Right lobe of liver (tissue), 6 donors: ENCODE measurements at regions of chr16 and their contacts with region 1.

Region 1: DNA sequence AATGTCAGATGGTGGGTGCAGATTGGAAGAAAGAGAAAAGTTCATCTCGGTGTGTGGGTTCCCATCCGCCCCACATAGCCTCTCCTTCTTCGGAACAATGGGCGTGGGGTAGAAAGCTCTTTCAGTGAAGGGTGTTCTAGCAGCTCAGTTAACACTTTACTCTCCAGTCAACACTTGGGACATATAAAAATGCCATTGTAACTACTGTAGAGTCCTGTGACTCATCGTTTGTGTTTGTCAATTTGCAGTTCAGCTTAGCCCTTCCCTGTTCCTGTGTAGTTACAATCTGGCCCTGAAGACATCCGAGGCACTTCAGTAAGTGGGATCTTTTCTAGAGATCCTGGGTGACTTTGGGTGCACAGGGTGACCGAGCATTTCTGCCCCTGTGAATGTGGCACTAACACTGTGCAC is 11.5 kb upstream of the CLEC18C start:
- DNase-seq: no peak
- ATAC-seq: peak in 1 of 4 donors; percentile 13
- H3K4me3 ChIP-seq: no peak overlapping the region
- H3K27ac ChIP-seq: no peak overlapping the region
- H3K4me1 ChIP-seq: no peaks in the 10 kb centered on the region
- H3K27me3 ChIP-seq: no peaks in the 10 kb centered on the region
- CTCF ChIP-seq: no peak
- POLR2A ChIP-seq: no peak

Region 2: GRCh38 chr16:70251629-70252354 is 89.7 kb after region 1 on chr16 and contains the start of gene EXOSC6:
- intact Hi-C with region 1: loop called in 1 of 2 experiments (anchors 10 kb)
- DNase-seq: peak; percentile 91 to 96 (median 92)
- ATAC-seq: peak; percentile 95 to 98 (median 96)
- H3K4me3 ChIP-seq: peak within 1 kb of the TSS; percentile 73 to 88 (median 84)
- H3K27ac ChIP-seq: peak within 1 kb of the TSS; percentile 60 to 79 (median 74)
- H3K4me1 ChIP-seq: peaks cover 0 to 20% (median 8%) of the 10 kb centered on the region in 4 donors
- H3K27me3 ChIP-seq: no peaks in the 10 kb centered on the region
- CTCF ChIP-seq: peak; percentile 94 to 98 (median 96)
- POLR2A ChIP-seq: peak; percentile 77
- total RNA-seq, gene EXOSC6: 6.1 to 13.1 (median 10.2) TPM

Region 3: GRCh38 chr16:70267516-70267915 is 105.5 kb after region 1 on chr16:
- intact Hi-C with region 1: loop called in 1 of 2 experiments (anchors 10 kb)
- DNase-seq: peak in 1 of 3 donors; percentile 26
- ATAC-seq: peak; percentile 56 to 74 (median 62)
- H3K4me3 ChIP-seq: no peak overlapping the region
- H3K27ac ChIP-seq: no peak overlapping the region
- H3K4me1 ChIP-seq: no peaks in the 10 kb centered on the region
- H3K27me3 ChIP-seq: no peaks in the 10 kb centered on the region
- CTCF ChIP-seq: peak; percentile 41 to 61 (median 58)
- POLR2A ChIP-seq: no peak

Region 4: GRCh38 chr16:70298988-70299938 is 137.2 kb after region 1 on chr16 and contains the start of gene DDX19B:
- intact Hi-C with region 1: no loop called
- DNase-seq: peak; percentile 87 to 90 (median 88)
- ATAC-seq: peak; percentile 91 to 96 (median 94)
- H3K4me3 ChIP-seq: peak within 1 kb of the TSS; percentile 80 to 91 (median 83)
- H3K27ac ChIP-seq: peak within 1 kb of the TSS; percentile 96 to 98 (median 97)
- H3K4me1 ChIP-seq: peaks cover 0 to 12% (median 0%) of the 10 kb centered on the region in 4 donors
- H3K27me3 ChIP-seq: no peaks in the 10 kb centered on the region
- CTCF ChIP-seq: peak in 1 of 4 donors; percentile 9
- POLR2A ChIP-seq: peak; percentile 86
- total RNA-seq, gene DDX19B: 15.2 to 32.3 (median 20.0) TPM

Region 5: DNA sequence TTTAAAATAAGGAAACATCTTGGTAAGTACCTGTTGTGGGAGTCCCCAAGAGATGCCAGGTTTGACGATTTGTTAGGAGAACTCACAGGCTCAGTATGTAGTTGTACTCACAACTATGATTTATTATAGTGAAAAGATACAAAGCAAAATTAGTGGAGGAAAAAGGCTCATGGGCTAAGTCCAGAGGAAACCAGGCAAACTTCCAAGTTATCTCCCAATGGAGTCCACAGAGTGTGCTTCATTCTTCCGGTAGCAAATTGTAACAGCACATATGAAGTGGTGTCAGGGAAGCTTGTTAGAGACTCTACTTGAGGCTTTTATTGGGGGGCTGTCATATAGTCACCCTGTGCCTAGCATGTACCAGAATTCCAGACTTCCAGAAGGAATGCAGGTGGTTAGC is 186.9 kb after region 1 on chr16:
- intact Hi-C with region 1: no loop called
- DNase-seq: no peak
- ATAC-seq: no peak
- H3K4me3 ChIP-seq: no peak overlapping the region
- H3K27ac ChIP-seq: no peak overlapping the region
- H3K4me1 ChIP-seq: peaks cover 0 to 26% (median 3%) of the 10 kb centered on the region in 4 donors
- H3K27me3 ChIP-seq: no peaks in the 10 kb centered on the region
- CTCF ChIP-seq: no peak
- POLR2A ChIP-seq: no peak